ENCODE measurements at regions of chr2 and their contacts with region 1.

Region 1: DNA sequence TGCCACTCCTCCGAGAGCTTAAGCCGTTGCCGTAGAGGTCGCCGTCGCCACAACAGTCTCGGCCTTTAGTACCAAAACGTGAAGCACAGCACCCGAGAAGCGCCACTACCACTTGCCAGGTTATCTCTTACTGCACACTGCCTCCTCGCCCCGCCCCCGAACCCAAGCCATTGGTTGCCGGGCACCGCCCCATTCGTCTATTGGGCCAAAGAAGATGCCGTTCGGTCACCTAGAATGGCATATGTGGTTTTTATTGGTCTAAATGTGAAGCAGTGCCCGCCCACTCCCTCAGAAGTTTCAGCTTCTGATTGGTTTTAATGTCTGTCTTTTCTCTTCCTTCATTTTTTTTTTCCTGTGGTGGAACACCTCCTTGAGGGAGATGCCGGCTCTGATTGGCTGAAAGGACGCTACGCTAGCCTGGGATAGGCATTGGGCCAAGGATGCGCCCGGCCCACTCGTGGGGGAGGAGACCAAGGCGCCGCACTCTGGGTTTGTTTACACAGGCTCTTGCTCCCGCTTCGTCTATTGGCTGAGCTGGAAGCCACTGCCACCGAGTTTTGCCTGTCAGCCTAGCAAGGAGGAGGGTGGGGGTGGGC is at the start of gene PAIP2B:
- DNase-seq: peak; percentile 99 to 100
- H3K4me3 ChIP-seq: peak within 1 kb of the TSS; percentile 81
- H3K4me3 Mint-ChIP-seq: peak within 1 kb of the TSS; percentile 94
- H3K27ac Mint-ChIP-seq: peak within 1 kb of the TSS; percentile 83
- H3K4me1 ChIP-seq: no peaks in the 10 kb centered on the region
- H3K4me1 Mint-ChIP-seq: no peaks in the 10 kb centered on the region
- H3K27me3 ChIP-seq: no peaks in the 10 kb centered on the region
- H3K27me3 Mint-ChIP-seq: no peaks in the 10 kb centered on the region
- CTCF ChIP-seq: no peak
- total RNA-seq, gene PAIP2B: 9.1 and 9.9 TPM in 2 replicates

Region 2: GRCh38 chr2:71157124-71157793 is 69.8 kb before region 1 on chr2:
- CTCF ChIA-PET with region 1: no interaction called
- POLR2A ChIA-PET with region 1: no interaction called
- intact Hi-C with region 1: loop called (anchors 1 kb)
- DNase-seq: peak; percentile 62 to 77
- H3K4me3 ChIP-seq: no peak overlapping the region
- H3K4me3 Mint-ChIP-seq: no peak overlapping the region
- H3K27ac Mint-ChIP-seq: no peak overlapping the region
- H3K4me1 ChIP-seq: peaks cover 10% of the 10 kb centered on the region; the same call in 1 of the 2 replicates
- H3K4me1 Mint-ChIP-seq: peaks cover 15% of the 10 kb centered on the region
- H3K27me3 ChIP-seq: no peaks in the 10 kb centered on the region
- H3K27me3 Mint-ChIP-seq: peaks cover 3% of the 10 kb centered on the region
- CTCF ChIP-seq: peak; percentile 77 to 80

Region 3: DNA sequence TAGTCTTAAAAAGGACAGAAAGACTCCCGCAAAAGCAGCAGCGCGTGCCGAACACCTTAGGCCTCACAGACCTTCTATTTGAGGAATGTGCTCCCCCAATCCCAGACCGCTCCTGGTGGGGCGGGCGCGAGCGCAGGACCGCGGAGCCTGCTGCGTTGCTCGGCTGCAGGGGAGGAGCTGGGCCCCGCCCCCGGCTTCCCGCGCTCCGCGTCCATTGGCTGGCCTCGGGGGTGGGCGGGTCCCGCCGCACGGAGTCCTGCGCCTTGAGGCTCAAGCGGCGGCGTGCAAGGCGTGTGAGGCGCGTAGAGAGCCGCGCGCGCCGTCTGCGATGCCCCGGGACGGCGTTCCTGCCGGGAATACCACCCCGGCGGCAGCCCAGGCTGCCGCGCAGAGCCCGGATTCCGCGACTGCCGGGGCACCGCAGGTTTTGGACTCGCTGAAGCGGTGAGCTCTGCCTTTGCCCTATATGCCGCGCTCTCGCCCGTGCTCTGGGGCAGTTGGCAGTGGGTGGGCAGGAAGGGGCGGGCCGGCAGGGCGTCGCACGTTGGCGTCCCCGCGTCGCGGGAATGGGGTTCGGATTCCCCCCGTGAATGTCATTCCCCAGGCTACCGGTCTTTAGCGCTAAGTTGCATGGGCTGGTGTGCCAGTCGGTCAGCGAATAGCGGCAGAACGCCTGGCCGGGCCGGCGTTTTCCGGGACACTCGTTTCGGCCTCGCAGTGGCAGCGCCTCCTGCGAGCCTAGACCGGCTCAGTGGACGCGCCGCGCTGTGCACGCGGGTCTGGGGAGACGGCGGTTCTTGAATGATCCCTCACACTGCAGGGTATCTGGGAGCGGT is 49.5 kb after region 1 on chr2:
- CTCF ChIA-PET with region 1: interaction called, 9 read pairs
- POLR2A ChIA-PET with region 1: interaction called, 27 read pairs
- intact Hi-C with region 1: loop called (anchors 1 kb)
- DNase-seq: peak; percentile 93 to 99
- H3K4me3 ChIP-seq: peak overlapping the region; percentile 62
- H3K4me3 Mint-ChIP-seq: peak overlapping the region; percentile 74
- H3K27ac Mint-ChIP-seq: peak overlapping the region; percentile 71
- H3K4me1 ChIP-seq: peaks cover 7% of the 10 kb centered on the region; the same call in 1 of the 2 replicates
- H3K4me1 Mint-ChIP-seq: peaks cover 6% of the 10 kb centered on the region
- H3K27me3 ChIP-seq: no peaks in the 10 kb centered on the region
- H3K27me3 Mint-ChIP-seq: peaks cover 13% of the 10 kb centered on the region
- CTCF ChIP-seq: no peak

Region 4: DNA sequence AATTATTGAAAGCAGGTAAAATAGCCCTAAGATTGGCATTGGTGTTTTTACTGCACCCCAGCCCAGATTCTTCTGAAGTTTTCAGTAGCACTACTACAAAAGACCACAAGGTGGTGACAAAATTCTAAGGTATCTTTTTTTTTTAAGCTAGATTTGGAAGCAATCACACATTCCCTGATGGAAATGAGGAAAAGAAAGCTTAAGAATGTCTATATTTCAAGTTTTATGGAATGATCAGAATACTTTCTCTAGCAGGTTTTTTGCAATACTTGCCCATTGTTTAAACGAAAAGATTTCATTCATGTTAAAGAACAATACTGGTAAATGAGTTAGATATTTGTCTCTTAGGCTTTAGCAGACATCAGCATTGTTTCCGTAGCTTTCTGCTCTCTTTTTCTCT is 72.4 kb after region 1 on chr2:
- CTCF ChIA-PET with region 1: interaction called, 10 read pairs
- POLR2A ChIA-PET with region 1: no interaction called
- intact Hi-C with region 1: loop called (anchors 5 kb)
- DNase-seq: peak in 1 of 2 experiments; percentile 53
- H3K4me3 ChIP-seq: no peak overlapping the region
- H3K4me3 Mint-ChIP-seq: no peak overlapping the region
- H3K27ac Mint-ChIP-seq: no peak overlapping the region
- H3K4me1 ChIP-seq: no peaks in the 10 kb centered on the region
- H3K4me1 Mint-ChIP-seq: no peaks in the 10 kb centered on the region
- H3K27me3 ChIP-seq: no peaks in the 10 kb centered on the region
- H3K27me3 Mint-ChIP-seq: no peaks in the 10 kb centered on the region
- CTCF ChIP-seq: peak; percentile 68 to 75

Region 5: DNA sequence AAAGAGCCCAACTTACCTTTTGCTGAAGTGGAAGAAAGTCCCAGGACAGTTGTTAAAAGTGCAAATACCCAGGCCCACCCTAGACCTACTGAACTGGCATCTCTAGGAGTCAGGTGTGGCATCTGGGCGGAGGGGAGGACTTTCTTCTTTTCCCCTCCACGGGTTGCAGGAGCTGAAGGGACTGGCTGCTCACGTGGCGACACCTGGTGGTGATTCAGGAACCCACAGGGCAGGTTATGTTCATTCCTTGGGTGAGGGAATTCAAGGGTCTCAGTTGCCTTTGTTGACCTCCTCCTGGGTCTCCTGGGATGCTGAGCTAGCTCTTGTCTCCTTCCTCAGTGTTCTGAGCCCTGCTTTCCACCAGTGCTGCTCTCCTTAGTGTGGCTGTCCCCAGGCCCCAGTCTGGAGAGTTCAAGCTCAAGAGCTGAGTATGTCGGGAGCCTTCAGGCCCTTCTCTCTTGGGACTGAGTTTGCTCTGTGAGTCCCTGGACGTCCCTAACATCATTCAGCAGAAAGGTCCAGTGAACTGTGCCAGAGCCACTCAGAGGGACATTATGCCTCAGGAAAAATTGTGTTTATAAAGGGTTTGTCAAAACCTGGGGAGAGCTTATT is 283.2 kb after region 1 on chr2:
- CTCF ChIA-PET with region 1: interaction called, 5 read pairs
- POLR2A ChIA-PET with region 1: no interaction called
- intact Hi-C with region 1: loop called (anchors 1 kb)
- DNase-seq: peak; percentile 77 to 82
- H3K4me3 ChIP-seq: no peak overlapping the region
- H3K4me3 Mint-ChIP-seq: no peak overlapping the region
- H3K27ac Mint-ChIP-seq: no peak overlapping the region
- H3K4me1 ChIP-seq: no peaks in the 10 kb centered on the region
- H3K4me1 Mint-ChIP-seq: no peaks in the 10 kb centered on the region
- H3K27me3 ChIP-seq: no peaks in the 10 kb centered on the region
- H3K27me3 Mint-ChIP-seq: peaks cover 11% of the 10 kb centered on the region
- CTCF ChIP-seq: peak; percentile 91 to 92